ENCODE measurements at regions of chr7 and their contacts with region 1.

Region 1: GRCh38 chr7:106367018-106367420 is 82.2 kb upstream of the NAMPT start:
- H3K4me3 Mint-ChIP-seq: no peak overlapping the region
- H3K27ac Mint-ChIP-seq: peak overlapping the region; percentile 33
- H3K4me1 Mint-ChIP-seq: peaks cover 34% of the 10 kb centered on the region
- H3K27me3 Mint-ChIP-seq: no peaks in the 10 kb centered on the region

Region 2: GRCh38 chr7:106176414-106177299 is 190.4 kb before region 1 on chr7:
- intact Hi-C with region 1: loop called (anchors 5 kb)
- H3K4me3 Mint-ChIP-seq: peak overlapping the region; percentile 26
- H3K27ac Mint-ChIP-seq: no peak overlapping the region
- H3K4me1 Mint-ChIP-seq: peaks cover 9% of the 10 kb centered on the region
- H3K27me3 Mint-ChIP-seq: peaks cover 33% of the 10 kb centered on the region

Region 3: GRCh38 chr7:106285051-106285854 is 81.8 kb before region 1 on chr7:
- intact Hi-C with region 1: loop called (anchors 5 kb)
- H3K4me3 Mint-ChIP-seq: peak overlapping the region; percentile 97
- H3K27ac Mint-ChIP-seq: peak overlapping the region; percentile 99
- H3K4me1 Mint-ChIP-seq: peaks cover 38% of the 10 kb centered on the region
- H3K27me3 Mint-ChIP-seq: no peaks in the 10 kb centered on the region

Region 4: DNA sequence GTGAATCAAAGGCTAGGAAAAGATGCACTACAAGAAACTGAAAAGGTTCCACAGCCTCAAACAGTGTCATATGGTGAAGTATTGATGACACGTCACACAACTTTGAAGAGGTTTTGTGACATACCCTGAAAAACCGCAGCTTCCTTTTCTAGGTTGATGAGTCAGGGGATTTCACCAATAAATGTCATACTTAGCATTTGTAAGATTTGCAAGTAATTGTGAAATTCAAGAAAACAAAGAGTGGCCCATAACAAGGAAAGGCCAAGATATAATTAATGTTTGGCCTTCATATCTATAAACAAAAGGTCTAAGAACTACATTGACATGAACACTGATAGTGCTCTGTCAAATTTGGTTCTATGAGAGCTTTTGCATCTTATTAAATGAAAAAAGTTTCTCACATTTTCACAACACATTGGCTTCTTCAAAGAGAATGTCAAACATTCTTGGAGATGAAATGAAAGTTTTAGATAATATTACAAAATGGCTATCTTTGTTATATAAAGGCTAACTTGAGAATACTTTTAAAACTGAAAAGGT is 20.3 kb before region 1 on chr7:
- intact Hi-C with region 1: loop called (anchors 2 kb)
- H3K4me3 Mint-ChIP-seq: no peak overlapping the region
- H3K27ac Mint-ChIP-seq: peak overlapping the region; percentile 91
- H3K4me1 Mint-ChIP-seq: peaks cover 45% of the 10 kb centered on the region
- H3K27me3 Mint-ChIP-seq: no peaks in the 10 kb centered on the region

Region 5: DNA sequence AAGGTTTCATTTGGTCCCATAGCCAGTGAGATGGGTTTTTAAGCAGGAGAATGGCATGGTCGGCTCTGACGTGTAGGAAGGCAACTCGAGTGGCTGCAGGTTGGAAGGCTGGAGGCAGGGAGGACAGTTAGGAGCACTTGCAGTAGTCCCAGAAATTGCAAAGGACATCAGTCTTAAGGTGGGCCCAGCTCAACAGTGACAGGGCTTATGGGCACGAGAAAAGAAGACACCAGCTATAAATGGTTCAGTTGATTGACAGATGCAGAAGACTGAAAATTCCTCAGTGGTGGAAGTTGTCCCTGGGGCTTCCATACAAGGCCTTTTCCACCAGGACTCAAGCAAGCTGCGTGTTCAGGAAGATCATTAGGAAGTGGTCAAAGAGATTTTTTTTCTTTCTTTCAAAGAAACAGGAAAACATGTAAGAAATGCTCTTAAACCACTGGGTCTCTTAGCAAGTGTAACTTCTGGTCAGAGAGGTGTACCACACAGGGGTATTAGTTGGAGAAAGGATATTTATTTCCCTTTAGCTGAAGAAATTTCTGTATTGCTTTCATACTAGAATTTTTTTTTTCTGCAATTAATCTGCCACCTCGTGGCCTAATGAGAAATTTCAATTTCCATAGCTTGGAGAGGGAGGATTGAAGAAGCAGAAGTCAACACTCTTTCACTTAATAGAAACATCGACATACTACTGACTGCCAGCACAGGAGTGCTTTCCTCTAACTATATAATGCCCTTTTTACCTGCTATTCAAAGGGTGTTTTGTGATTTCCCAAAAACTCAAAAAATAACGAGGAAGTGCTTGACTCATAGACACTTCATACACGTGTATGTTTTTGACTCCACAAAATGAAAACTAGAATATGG is 95.2 kb after region 1 on chr7:
- intact Hi-C with region 1: loop called (anchors 5 kb)
- H3K4me3 Mint-ChIP-seq: no peak overlapping the region
- H3K27ac Mint-ChIP-seq: no peak overlapping the region
- H3K4me1 Mint-ChIP-seq: peaks cover 14% of the 10 kb centered on the region
- H3K27me3 Mint-ChIP-seq: no peaks in the 10 kb centered on the region

Region 6: GRCh38 chr7:106583101-106583500 is 216.1 kb after region 1 on chr7:
- intact Hi-C with region 1: no loop called
- H3K4me3 Mint-ChIP-seq: no peak overlapping the region
- H3K27ac Mint-ChIP-seq: no peak overlapping the region
- H3K4me1 Mint-ChIP-seq: no peaks in the 10 kb centered on the region
- H3K27me3 Mint-ChIP-seq: peaks cover 12% of the 10 kb centered on the region